ENCODE measurements at regions of chr5 and their contacts with region 1.

Region 1: GRCh38 chr5:87277279-87277835 is 9.7 kb downstream of the RASA1 start:
- DNase-seq: no peak
- ATAC-seq: no peak
- H3K4me3 Mint-ChIP-seq: no peak overlapping the region
- H3K27ac Mint-ChIP-seq: no peak overlapping the region
- H3K4me1 Mint-ChIP-seq: peaks cover 51% of the 10 kb centered on the region
- H3K27me3 Mint-ChIP-seq: no peaks in the 10 kb centered on the region
- CTCF ChIP-seq: no peak

Region 2: DNA sequence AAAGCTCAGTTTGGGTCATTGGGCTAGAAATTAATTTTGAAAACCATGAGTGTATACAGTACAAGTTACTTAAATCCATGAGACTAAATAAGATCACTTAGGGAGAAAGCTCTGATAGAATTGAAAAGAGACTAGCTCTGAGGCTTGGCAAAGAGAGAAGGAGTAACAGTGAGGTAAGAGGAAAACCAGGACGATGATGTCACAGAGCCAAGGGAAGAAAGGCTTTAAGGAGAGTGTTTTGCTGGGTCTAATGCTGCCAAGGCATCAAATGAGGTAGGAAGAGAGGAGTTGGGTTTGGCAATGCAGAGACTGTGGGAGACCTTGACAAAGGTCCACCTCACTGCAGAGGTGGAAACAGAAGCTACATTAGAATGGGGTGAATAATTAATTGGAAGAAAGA is 49.1 kb before region 1 on chr5:
- CTCF ChIA-PET with region 1: no interaction called
- POLR2A ChIA-PET with region 1: interaction called, 10 read pairs
- intact Hi-C with region 1: no loop called
- DNase-seq: no peak
- ATAC-seq: no peak
- H3K4me3 Mint-ChIP-seq: no peak overlapping the region
- H3K27ac Mint-ChIP-seq: no peak overlapping the region
- H3K4me1 Mint-ChIP-seq: peaks cover under 1% of the 10 kb centered on the region
- H3K27me3 Mint-ChIP-seq: no peaks in the 10 kb centered on the region
- CTCF ChIP-seq: no peak

Region 3: DNA sequence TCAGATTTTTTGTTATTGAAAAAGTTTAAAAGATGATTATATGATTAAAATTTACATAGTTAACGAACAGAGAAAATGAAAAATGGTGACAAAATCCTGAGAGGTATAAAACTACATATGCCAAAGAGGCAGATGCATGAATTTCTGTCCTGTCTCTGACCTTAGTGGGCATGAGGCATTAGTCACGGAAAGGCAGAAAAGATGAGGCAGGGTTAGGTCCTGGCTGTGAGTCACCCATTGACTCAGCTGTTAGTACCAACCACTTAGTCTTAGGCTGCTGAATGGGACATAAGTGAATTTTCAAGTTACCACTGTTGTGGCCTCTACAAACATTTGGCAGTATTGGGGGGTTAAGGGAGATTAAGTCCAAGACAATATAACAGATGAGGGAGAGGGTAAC is 23.4 kb after region 1 on chr5:
- CTCF ChIA-PET with region 1: no interaction called
- POLR2A ChIA-PET with region 1: no interaction called
- intact Hi-C with region 1: loop called (anchors 2 kb)
- DNase-seq: no peak
- ATAC-seq: peak; percentile 74
- H3K4me3 Mint-ChIP-seq: no peak overlapping the region
- H3K27ac Mint-ChIP-seq: no peak overlapping the region
- H3K4me1 Mint-ChIP-seq: peaks cover 50% of the 10 kb centered on the region
- H3K27me3 Mint-ChIP-seq: no peaks in the 10 kb centered on the region
- CTCF ChIP-seq: no peak

Region 4: DNA sequence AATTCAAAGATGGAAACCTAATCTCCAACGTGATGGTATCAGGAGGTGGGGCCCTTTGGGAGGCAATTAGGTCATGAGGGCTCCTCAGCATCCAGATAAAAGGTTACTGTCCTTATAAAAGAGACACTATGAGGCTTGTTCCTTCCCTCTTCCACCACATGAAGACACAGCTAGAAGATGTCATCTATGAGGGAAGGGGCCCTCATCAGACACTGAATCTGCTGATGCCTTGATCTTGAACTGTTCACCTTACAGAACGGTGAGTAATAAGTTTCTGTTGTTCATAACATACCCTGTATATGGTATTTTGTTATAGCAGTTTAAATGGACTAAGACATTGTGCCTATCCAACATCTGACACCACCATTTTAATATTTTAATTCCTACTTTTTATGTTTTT is 155.1 kb after region 1 on chr5:
- CTCF ChIA-PET with region 1: no interaction called
- POLR2A ChIA-PET with region 1: no interaction called
- intact Hi-C with region 1: no loop called
- DNase-seq: no peak
- ATAC-seq: no peak
- H3K4me3 Mint-ChIP-seq: no peak overlapping the region
- H3K27ac Mint-ChIP-seq: no peak overlapping the region
- H3K4me1 Mint-ChIP-seq: no peaks in the 10 kb centered on the region
- H3K27me3 Mint-ChIP-seq: peaks cover 7% of the 10 kb centered on the region
- CTCF ChIP-seq: no peak

Measured in activated B cell treated with CpG ODN at 0.5 μM for 24 hours (primary cell).